Panc1 (cell line): ENCODE measurements at regions of chr22 and their contacts with region 1.

Region 1: DNA sequence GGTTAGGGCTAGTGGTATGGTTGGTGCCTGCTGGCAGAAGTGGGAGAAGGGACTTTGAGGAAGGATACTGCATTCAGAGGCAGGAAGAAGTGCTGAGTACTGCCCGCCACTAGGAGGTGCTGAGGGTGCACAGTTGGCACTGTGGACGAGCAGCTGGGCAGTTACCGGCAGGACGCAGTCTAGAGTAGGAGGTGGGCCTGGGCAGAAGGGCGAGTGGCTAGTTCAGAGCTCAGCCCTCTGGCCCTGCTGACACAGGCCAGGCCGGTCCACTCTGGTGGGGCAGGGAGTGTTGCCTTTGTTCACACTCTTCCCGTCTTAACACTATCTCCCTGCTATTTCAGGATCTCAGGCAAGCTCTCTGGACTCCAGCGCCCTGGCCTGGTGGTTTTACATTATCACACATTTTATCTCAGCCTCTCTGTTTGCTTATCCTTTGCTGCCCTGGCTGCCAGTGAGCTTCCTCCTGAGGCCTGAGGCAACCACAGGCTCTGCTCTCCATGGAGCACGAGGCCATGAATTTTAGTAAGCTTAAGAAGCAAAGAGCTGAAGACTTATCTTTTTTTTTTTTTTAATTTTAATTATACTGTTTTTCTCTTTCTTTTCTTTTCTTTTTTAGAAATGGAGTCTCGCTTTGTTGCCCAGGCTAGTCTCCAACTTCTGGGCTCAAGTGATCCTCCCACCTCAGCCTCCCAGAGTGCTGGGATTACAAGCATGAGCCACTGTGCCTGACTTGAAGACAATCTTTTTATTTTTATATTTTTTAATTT is 26.9 kb downstream of the SNAP29 start:
- DNase-seq: peak; percentile 72
- ATAC-seq: peak; percentile 100
- H3K4me3 ChIP-seq: no peak overlapping the region
- H3K27ac ChIP-seq: peak overlapping the region; percentile 59
- H3K4me1 ChIP-seq: peaks cover 6% of the 10 kb centered on the region
- H3K27me3 ChIP-seq: no peaks in the 10 kb centered on the region
- CTCF ChIP-seq: peak; percentile 90

Region 2: GRCh38 chr22:20792947-20793294 is 92.8 kb before region 1 on chr22:
- CTCF ChIA-PET with region 1: no interaction called
- POLR2A ChIA-PET with region 1: no interaction called
- in situ Hi-C with region 1: no loop called
- intact Hi-C with region 1: no loop called
- DNase-seq: no peak
- ATAC-seq: no peak
- H3K4me3 ChIP-seq: no peak overlapping the region
- H3K27ac ChIP-seq: no peak overlapping the region
- H3K4me1 ChIP-seq: no peaks in the 10 kb centered on the region
- H3K27me3 ChIP-seq: no peaks in the 10 kb centered on the region
- CTCF ChIP-seq: no peak

Region 3: DNA sequence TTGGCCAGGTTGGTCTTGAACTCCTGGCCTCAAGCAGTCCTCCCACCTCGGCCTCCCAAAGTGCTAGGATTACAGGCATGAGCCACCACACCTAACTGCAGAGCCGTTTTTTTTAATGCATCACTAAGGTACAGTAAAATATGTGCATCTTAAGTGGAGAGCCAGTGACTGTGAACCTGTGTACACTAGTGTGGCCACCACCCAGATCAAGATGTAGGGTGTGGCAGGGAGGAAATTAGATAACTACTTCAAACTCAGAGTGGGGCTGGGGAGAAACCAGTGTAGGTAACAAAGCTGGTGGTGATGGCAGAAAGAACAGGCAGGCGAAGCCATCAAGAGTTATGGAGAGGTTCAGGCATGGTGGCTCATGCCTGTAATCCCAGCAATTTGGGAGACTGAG is 12.5 kb before region 1 on chr22:
- CTCF ChIA-PET with region 1: no interaction called
- POLR2A ChIA-PET with region 1: no interaction called
- in situ Hi-C with region 1: no loop called
- intact Hi-C with region 1: no loop called
- DNase-seq: no peak
- ATAC-seq: no peak
- H3K4me3 ChIP-seq: no peak overlapping the region
- H3K27ac ChIP-seq: no peak overlapping the region
- H3K4me1 ChIP-seq: no peaks in the 10 kb centered on the region
- H3K27me3 ChIP-seq: no peaks in the 10 kb centered on the region
- CTCF ChIP-seq: no peak

Region 4: GRCh38 chr22:20946080-20946986 is 60.6 kb after region 1 on chr22:
- CTCF ChIA-PET with region 1: interaction called, 3 read pairs
- POLR2A ChIA-PET with region 1: no interaction called
- in situ Hi-C with region 1: no loop called
- intact Hi-C with region 1: loop called (anchors 10 kb)
- DNase-seq: no peak
- ATAC-seq: peak; percentile 66
- H3K4me3 ChIP-seq: no peak overlapping the region
- H3K27ac ChIP-seq: no peak overlapping the region
- H3K4me1 ChIP-seq: peaks cover 19% of the 10 kb centered on the region
- H3K27me3 ChIP-seq: no peaks in the 10 kb centered on the region
- CTCF ChIP-seq: no peak